ENCODE measurements at regions of chr22 and their contacts with region 1.

Region 1: GRCh38 chr22:40679964-40680818 is 907 bp downstream of the MCHR1 start:
- DNase-seq: no peak
- H3K4me3 ChIP-seq: no peak overlapping the region
- H3K27ac ChIP-seq: no peak overlapping the region
- H3K4me1 ChIP-seq: peaks cover 10 to 48% (median 18%) of the 10 kb centered on the region in 3 donors
- H3K27me3 ChIP-seq: peaks cover 0 to 24% (median 0%) of the 10 kb centered on the region in 4 donors
- CTCF ChIP-seq: no peak
- POLR2A ChIP-seq: no peak

Region 2: GRCh38 chr22:40764763-40765441 is 84.7 kb after region 1 on chr22:
- intact Hi-C with region 1: loop called (anchors 10 kb)
- DNase-seq: no peak
- H3K4me3 ChIP-seq: no peak overlapping the region
- H3K27ac ChIP-seq: no peak overlapping the region
- H3K4me1 ChIP-seq: peaks cover 0 to 7% (median 0%) of the 10 kb centered on the region in 3 donors
- H3K27me3 ChIP-seq: no peaks in the 10 kb centered on the region
- CTCF ChIP-seq: no peak
- POLR2A ChIP-seq: no peak

Measured in esophagus squamous epithelium (tissue), 5 donors.